ENCODE measurements at regions of chr6 and their contacts with region 1.

Region 1: DNA sequence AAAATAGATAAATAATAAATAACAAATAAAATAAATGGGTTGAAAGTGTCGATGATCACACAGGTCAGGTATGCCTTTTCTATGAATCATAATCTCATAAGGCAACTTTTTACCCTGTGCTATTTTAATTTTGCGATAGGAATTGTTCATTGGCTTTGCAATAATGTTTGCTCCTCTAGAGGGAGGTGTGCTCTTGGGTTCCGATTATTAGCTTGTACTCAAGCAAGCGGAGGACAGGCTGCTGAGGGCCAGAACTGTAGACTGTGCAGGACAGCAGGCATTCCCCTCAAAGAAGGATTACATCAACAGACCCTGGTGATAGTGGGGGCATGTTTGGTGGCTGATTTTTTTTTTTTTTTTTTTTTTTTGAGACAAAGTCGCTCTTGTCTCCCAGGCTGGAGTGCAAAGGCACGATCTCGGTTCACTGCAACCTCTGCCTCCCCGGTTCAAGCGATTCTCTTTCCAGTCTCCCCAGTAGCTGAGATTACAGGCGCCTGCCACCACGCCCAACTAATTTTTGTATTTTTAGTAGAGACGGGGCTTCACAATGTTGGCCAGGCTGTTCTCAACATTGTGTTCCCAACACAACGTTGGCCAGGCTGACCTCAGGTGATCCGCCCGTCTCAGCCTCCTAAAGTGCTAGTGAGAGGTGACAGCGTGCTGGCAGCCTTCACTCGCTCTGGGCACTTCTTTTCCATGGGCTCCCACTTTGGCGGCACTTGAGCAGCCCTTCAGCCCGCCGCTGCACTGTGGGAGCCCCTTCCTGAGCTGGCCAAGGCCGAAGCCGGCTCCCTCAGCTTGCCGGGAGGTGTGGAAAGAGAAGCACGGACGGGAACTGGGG is 35.6 kb downstream of the RIOK1 start:
- DNase-seq: peak in 4 of 5 donors; percentile 18 to 88 (median 77)
- ATAC-seq: peak; percentile 83 to 93 (median 92)
- H3K4me3 ChIP-seq: no peak overlapping the region
- H3K27ac ChIP-seq: peak overlapping the region in 6 of 12 donors; percentile 7 to 70 (median 44)
- H3K4me1 ChIP-seq: no peaks in the 10 kb centered on the region
- H3K27me3 ChIP-seq: no peaks in the 10 kb centered on the region
- CTCF ChIP-seq: peak; percentile 25 to 63 (median 52)
- POLR2A ChIP-seq: no peak

Region 2: GRCh38 chr6:7468382-7469081 is 43.3 kb after region 1 on chr6:
- intact Hi-C with region 1: loop called in 1 of 10 experiments (anchors 5 kb)
- DNase-seq: peak; percentile 63 to 86 (median 81)
- ATAC-seq: peak; percentile 93 to 96 (median 94)
- H3K4me3 ChIP-seq: peak overlapping the region in 10 of 12 donors; percentile 18 to 49 (median 35)
- H3K27ac ChIP-seq: peak overlapping the region in 11 of 12 donors; percentile 30 to 79 (median 66)
- H3K4me1 ChIP-seq: peaks cover 0 to 23% (median 12%) of the 10 kb centered on the region in 12 donors
- H3K27me3 ChIP-seq: no peaks in the 10 kb centered on the region
- CTCF ChIP-seq: peak in 2 of 12 donors; percentile 10 to 19
- POLR2A ChIP-seq: no peak

Region 3: DNA sequence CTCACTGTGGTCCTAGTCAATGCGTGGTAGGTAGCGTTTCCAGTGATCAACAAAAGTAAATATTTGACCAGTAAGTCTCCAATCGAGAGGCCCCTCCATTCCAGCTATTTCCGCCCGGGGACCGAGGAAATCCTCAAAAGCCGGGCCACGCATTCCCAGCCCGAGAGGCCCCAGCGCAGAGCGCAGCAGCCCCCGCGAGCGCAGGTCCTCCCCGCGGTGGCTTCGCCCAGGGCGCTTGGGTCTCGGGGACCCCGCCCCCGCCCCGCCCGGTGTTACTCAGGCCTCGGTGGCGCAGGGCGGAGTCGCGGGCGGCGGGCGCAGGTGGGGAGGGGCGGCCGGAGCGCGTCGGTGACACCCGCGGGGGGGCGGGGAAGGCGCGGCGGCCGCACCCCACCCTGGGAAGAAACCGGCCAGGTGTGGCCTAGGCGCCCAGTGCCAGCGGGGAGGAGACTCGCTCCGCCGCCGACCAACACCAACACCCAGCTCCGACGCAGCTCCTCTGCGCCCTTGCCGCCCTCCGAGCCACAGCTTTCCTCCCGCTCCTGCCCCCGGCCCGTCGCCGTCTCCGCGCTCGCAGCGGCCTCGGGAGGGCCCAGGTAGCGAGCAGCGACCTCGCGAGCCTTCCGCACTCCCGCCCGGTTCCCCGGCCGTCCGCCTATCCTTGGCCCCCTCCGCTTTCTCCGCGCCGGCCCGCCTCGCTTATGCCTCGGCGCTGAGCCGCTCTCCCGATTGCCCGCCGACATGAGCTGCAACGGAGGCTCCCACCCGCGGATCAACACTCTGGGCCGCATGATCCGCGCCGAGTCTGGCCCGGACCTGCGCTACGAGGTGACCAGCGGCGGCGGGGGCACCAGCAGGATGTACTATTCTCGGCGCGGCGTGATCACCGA is 116.2 kb after region 1 on chr6 and contains the start of gene DSP:
- intact Hi-C with region 1: loop called in 7 of 10 experiments (anchors 2 to 5 kb)
- DNase-seq: peak; percentile 57 to 86 (median 79)
- ATAC-seq: peak; percentile 55 to 83 (median 75)
- H3K4me3 ChIP-seq: peak within 1 kb of the TSS; percentile 59 to 83 (median 70)
- H3K27ac ChIP-seq: peak within 1 kb of the TSS; percentile 81 to 97 (median 92)
- H3K4me1 ChIP-seq: peaks cover 0 to 29% (median 5%) of the 10 kb centered on the region in 12 donors
- H3K27me3 ChIP-seq: peaks cover 0 to 94% (median 35%) of the 10 kb centered on the region in 9 donors
- CTCF ChIP-seq: no peak
- POLR2A ChIP-seq: peak in 1 of 2 donors; percentile 76
- total RNA-seq, gene DSP: 238 to 373 (median 337) TPM

Region 4: GRCh38 chr6:7561153-7561964 is 136.2 kb after region 1 on chr6:
- intact Hi-C with region 1: loop called in 5 of 10 experiments (anchors 5 to 10 kb)
- DNase-seq: peak in 2 of 5 donors; percentile 45 to 58
- ATAC-seq: peak; percentile 85 to 93 (median 88)
- H3K4me3 ChIP-seq: peak overlapping the region in 3 of 12 donors; percentile 9 to 13 (median 11)
- H3K27ac ChIP-seq: peak overlapping the region in 11 of 12 donors; percentile 53 to 82 (median 69)
- H3K4me1 ChIP-seq: peaks cover 0 to 16% (median 1%) of the 10 kb centered on the region in 12 donors
- H3K27me3 ChIP-seq: peaks cover 0 to 28% (median 0%) of the 10 kb centered on the region in 9 donors
- CTCF ChIP-seq: no peak
- POLR2A ChIP-seq: no peak

Region 5: GRCh38 chr6:7604506-7604905 is 179.3 kb after region 1 on chr6:
- intact Hi-C with region 1: loop called in 1 of 10 experiments (anchors 5 kb)
- DNase-seq: no peak
- ATAC-seq: no peak
- H3K4me3 ChIP-seq: no peak overlapping the region
- H3K27ac ChIP-seq: peak overlapping the region in 4 of 12 donors; percentile 10 to 60 (median 24)
- H3K4me1 ChIP-seq: peaks cover 0 to 14% (median 1%) of the 10 kb centered on the region in 12 donors
- H3K27me3 ChIP-seq: no peaks in the 10 kb centered on the region
- CTCF ChIP-seq: no peak
- POLR2A ChIP-seq: no peak